Activated naive CD4-positive, alpha-beta T cell treated with anti-CD3 and anti-CD28 coated beads for 36 hours (primary cell): ENCODE measurements at regions of chr3 and their contacts with region 1.

Region 1: GRCh38 chr3:160486459-160486869 is 36.9 kb upstream of the TRIM59 start:
- DNase-seq: peak; percentile 14
- H3K4me3 Mint-ChIP-seq: no peak overlapping the region
- H3K27ac Mint-ChIP-seq: no peak overlapping the region
- H3K4me1 Mint-ChIP-seq: peaks cover 5% of the 10 kb centered on the region
- H3K27me3 Mint-ChIP-seq: peaks cover 7% of the 10 kb centered on the region

Region 2: DNA sequence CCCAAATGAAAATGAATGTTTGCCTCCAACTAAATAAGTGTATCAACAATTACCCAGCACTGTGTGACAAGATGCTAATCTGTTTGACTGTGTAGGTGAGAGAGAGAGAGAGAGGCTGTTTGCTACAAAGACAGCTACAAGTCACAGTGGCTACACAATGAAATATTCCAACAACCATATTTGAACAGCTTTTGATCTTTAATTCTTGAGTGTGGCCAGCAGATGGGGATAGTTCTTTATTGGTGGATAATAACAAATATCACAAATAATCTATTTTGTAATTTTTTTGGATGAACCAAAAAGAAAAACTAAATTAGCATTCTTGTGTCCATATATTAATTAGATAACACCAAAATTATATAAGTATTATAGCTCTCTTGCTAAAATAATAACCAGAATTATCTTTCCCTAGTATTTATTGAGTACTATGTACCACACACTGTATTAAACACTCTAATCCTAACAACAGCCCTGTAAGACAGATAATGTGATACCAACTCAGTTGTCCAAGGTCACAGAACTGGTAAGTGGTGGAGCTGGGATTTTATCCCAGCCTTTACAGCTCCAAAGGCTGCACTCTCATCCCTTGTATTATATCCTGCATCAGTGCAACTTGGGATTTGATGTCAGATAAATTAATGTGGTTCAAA is 323.1 kb before region 1 on chr3:
- CTCF ChIA-PET with region 1: no interaction called
- intact Hi-C with region 1: loop called (anchors 1 kb)
- DNase-seq: no peak
- H3K4me3 Mint-ChIP-seq: no peak overlapping the region
- H3K27ac Mint-ChIP-seq: no peak overlapping the region
- H3K4me1 Mint-ChIP-seq: no peaks in the 10 kb centered on the region
- H3K27me3 Mint-ChIP-seq: no peaks in the 10 kb centered on the region

Region 3: DNA sequence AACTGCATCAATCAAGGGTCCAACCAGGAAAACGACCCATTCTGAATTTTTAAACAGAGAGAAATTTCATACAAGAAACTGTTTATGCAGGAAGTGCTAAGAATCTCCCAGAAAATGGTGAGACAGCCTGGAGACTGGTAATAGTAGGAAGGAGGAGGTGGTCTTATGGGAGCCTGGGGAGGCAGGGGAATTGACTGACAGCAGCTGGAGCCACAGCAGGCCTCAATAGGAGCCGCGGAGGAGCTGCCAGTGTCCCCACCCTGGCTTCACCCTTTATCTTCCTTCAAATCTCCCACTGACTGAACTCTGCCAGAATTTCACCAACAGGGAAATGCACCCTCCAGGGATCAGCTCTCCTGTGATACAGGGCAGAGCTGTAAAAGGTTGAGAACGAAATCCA is 268.8 kb before region 1 on chr3:
- CTCF ChIA-PET with region 1: no interaction called
- intact Hi-C with region 1: loop called (anchors 2 kb)
- DNase-seq: no peak
- H3K4me3 Mint-ChIP-seq: no peak overlapping the region
- H3K27ac Mint-ChIP-seq: no peak overlapping the region
- H3K4me1 Mint-ChIP-seq: no peaks in the 10 kb centered on the region
- H3K27me3 Mint-ChIP-seq: peaks cover 36% of the 10 kb centered on the region

Region 4: DNA sequence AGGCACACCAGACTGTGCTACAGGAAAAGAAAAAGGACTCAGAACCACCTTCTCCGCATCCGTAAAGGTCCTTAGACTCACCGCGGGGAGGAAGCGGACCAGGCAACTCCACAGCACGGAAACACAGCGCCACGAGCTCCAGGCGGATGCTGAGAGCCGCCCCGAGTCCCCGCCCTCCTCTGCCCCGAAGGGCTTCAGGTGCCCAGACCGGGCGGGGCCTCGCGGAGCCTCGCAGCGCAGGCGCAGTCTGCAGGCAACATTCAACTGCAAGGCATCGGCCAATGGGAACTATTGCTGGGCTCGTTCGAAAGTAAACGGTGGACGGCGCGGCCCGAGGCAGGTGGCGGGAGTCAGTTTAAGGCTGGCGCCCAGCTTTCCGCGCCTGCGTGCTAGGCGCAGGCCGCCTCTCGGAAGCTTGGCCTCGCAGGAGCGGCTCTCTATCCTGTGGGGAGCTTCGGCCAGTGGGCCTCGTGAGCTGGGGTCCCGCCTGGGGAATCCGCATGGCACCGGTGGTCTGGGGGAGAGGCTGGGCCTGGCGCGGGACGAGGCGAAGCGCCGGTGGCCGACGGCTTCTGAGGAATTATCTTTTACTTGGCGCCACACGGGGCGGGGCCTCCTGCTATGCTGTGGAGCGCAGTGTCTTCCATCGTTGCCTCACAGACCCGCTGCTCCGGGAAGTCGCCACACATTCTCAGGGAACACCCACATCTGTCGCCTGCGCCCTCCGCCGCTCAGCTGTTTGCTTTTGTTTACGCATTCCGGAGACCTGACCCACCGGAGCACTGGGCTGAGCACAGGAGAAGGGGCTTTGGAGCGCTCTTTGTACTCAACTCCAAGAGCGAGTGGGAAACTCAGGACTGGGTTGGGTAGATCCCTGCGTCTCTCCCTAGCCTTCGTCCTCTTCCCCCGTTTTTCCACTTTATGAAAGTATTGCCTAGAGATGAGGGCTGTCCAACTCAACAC is 36.5 kb before region 1 on chr3 and contains the start of gene TRIM59:
- CTCF ChIA-PET with region 1: interaction called, 3 read pairs
- intact Hi-C with region 1: loop called (anchors 1 kb)
- DNase-seq: peak; percentile 98
- H3K4me3 Mint-ChIP-seq: peak within 1 kb of the TSS; percentile 91
- H3K27ac Mint-ChIP-seq: peak within 1 kb of the TSS; percentile 90
- H3K4me1 Mint-ChIP-seq: peaks cover 26% of the 10 kb centered on the region
- H3K27me3 Mint-ChIP-seq: no peaks in the 10 kb centered on the region
- total RNA-seq, gene TRIM59: 25.8 TPM

Region 5: GRCh38 chr3:160544844-160545503 is 58.5 kb after region 1 on chr3:
- CTCF ChIA-PET with region 1: no interaction called
- intact Hi-C with region 1: no loop called
- DNase-seq: no peak
- H3K4me3 Mint-ChIP-seq: no peak overlapping the region
- H3K27ac Mint-ChIP-seq: no peak overlapping the region
- H3K4me1 Mint-ChIP-seq: peaks cover 69% of the 10 kb centered on the region
- H3K27me3 Mint-ChIP-seq: no peaks in the 10 kb centered on the region